ENCODE measurements at regions of chr12 and their contacts with region 1.

Region 1: GRCh38 chr12:116737774-116738700 is at the starts of genes RNFT2 and SPRING1:
- DNase-seq: peak; percentile 98 to 100
- ATAC-seq: peak; percentile 99 to 100 (median 100)
- H3K4me3 ChIP-seq: peak within 1 kb of the TSS; percentile 65 to 97 (median 87)
- H3K27ac ChIP-seq: peak within 1 kb of the TSS in 9 of 10 donors; percentile 61 to 89 (median 84)
- H3K4me1 ChIP-seq: peaks cover 4 to 20% (median 15%) of the 10 kb centered on the region in 9 donors
- H3K27me3 ChIP-seq: no peaks in the 10 kb centered on the region
- CTCF ChIP-seq: peak in 1 of 9 donors; percentile 34
- total RNA-seq, gene RNFT2: 0.53 to 2.2 (median 1.6) TPM
- total RNA-seq, gene SPRING1: 6.2 to 19.5 (median 10.5) TPM

Region 2: GRCh38 chr12:114767906-114768722 is 1969.9 kb before region 1 on chr12:
- intact Hi-C with region 1: no loop called
- DNase-seq: no peak
- ATAC-seq: no peak
- H3K4me3 ChIP-seq: no peak overlapping the region
- H3K27ac ChIP-seq: no peak overlapping the region
- H3K4me1 ChIP-seq: peaks cover 0 to 1% (median 0%) of the 10 kb centered on the region in 9 donors
- H3K27me3 ChIP-seq: peaks cover 0 to 3% (median 0%) of the 10 kb centered on the region in 7 donors
- CTCF ChIP-seq: no peak

Region 3: DNA sequence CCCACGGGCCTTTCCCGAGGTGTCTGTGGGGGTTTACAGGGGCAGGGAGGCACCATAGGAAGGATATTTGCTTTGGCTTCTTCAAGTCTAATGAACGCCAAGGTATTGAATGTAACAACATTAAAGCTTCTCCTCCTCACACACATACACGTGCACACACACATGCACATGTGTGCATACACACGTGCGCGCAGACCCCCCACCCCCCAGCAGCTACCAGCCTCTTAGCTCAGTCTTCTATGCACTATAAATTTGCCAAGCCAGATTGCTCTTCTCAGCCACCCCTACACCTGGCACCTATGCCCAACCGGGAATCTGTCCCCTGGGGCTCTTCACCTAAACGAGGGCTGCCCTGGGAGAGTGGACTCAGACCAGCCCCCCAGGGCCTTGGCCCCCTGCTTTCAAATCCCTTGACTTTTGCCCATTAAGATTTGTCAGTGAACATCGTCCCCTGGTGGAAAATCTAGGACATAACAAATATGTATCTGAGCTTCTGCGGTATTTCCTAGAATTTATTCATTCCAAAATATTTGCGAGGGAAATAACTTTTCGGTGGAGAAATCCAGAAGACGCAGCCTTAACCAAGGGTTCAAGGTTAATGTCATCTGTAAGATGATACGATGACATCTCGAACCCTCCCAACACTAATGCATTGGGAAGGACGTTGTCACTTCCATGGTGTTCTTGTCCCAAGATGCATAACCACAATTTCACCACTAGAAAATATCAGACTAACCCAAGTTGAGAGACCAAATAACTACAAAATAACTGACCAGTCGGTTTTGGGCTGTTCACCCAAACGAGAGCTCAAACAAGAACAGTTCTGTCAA is 791.0 kb before region 1 on chr12:
- intact Hi-C with region 1: no loop called
- DNase-seq: no peak
- ATAC-seq: no peak
- H3K4me3 ChIP-seq: no peak overlapping the region
- H3K27ac ChIP-seq: no peak overlapping the region
- H3K4me1 ChIP-seq: no peaks in the 10 kb centered on the region
- H3K27me3 ChIP-seq: peaks cover 0 to 3% (median 0%) of the 10 kb centered on the region in 7 donors
- CTCF ChIP-seq: peak in 7 of 9 donors; percentile 8 to 51 (median 35)

Region 4: DNA sequence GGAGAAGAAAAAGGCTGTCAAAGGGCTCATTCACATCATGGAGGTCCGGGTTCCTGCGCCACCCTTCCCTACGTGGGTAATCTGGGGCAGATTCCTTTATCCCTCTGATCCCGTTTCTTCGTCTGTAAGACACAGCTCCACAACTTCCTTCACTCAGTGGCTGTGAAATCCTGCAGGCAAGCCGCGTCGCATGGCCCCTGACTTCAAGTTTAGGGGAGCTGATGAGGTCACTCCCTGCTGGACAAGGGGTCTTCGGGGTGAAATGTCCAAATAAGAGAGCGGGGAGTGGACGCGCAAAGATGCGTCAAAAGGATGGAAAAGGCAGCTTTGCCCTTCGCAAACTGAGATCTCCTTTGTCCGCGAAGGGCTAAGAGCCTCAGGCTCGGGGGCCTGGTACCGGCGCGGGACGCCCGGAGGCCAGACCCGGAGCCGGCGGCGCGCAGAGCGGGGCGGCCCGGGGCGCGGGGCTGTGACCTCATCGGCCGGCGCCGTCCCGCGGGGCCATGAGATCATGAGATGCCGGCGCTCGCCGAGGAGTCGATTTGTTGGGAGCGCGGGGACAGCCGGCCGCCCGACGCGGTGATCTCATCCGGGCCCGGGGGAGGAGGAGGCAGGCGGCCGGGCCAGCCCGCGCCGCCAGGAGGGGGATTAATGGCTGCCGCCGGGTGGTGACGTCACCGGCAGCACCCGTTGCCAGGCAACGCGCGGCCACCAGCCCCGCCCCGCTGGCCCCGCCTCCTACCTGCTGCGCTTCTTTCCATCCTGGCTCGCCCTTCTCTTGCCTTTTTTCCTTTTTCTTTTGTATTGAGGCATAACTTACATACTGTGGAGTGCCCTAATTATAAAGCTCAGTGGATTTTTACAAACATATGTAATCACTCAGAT is 81.2 kb after region 1 on chr12:
- intact Hi-C with region 1: loop called in 7 of 10 experiments (anchors 2 to 10 kb)
- DNase-seq: peak; percentile 91 to 92
- ATAC-seq: peak; percentile 96 to 98 (median 97)
- H3K4me3 ChIP-seq: peak overlapping the region; percentile 23 to 87 (median 72)
- H3K27ac ChIP-seq: peak overlapping the region; percentile 77 to 97 (median 94)
- H3K4me1 ChIP-seq: peaks cover 6 to 17% (median 12%) of the 10 kb centered on the region in 9 donors
- H3K27me3 ChIP-seq: no peaks in the 10 kb centered on the region
- CTCF ChIP-seq: peak in 2 of 9 donors; percentile 20 to 34

Region 5: DNA sequence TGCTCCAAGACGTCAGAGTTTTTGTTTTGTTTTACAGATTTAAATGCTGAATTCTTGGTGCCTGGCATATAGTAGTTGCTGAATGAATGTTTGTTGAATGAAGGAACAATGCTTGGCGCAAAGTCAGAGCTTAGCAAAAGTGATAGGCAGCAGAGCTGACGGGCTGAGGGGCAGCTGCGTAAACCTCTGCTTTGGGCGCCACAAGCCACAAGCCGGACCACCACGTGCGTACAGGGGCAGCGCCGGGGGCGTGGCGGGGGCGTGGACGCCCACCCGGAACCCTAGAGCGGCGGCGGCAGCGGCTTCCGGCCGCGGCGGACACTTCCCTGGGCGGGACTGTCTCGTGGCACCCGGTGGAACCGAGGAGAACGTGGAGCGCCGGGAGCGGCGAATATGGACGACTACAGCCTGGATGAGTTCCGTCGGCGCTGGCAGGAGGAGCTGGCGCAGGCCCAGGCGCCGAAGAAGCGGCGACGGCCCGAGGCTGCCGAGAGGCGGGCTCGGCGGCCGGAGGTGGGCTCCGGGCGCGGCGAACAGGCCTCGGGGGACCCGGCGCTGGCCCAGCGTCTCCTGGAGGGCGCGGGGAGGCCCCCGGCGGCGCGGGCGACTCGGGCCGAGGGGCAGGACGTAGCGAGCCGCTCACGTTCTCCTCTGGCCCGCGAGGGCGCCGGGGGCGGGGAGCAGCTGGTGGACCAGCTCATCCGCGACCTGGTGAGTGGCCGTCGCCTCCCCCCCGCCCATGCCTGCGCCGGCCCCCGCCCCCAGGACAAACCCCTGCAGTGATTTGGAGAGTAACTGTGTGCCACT is 172.8 kb after region 1 on chr12 and contains the start of gene FBXW8:
- intact Hi-C with region 1: loop called in 1 of 10 experiments (anchors 10 kb)
- DNase-seq: peak; percentile 61 to 81
- ATAC-seq: peak; percentile 90 to 96 (median 92)
- H3K4me3 ChIP-seq: peak within 1 kb of the TSS; percentile 62 to 95 (median 76)
- H3K27ac ChIP-seq: peak within 1 kb of the TSS; percentile 67 to 92 (median 85)
- H3K4me1 ChIP-seq: peaks cover 0 to 22% (median 8%) of the 10 kb centered on the region in 9 donors
- H3K27me3 ChIP-seq: peaks cover 0 to 4% (median 0%) of the 10 kb centered on the region in 7 donors
- CTCF ChIP-seq: no peak
- total RNA-seq, gene FBXW8: 5.3 to 11.3 (median 7.6) TPM

Measured in heart right ventricle (tissue), 16 donors.